Left colon (tissue), 2 donors: ENCODE measurements at regions of chr19 and their contacts with region 1.

Region 1: DNA sequence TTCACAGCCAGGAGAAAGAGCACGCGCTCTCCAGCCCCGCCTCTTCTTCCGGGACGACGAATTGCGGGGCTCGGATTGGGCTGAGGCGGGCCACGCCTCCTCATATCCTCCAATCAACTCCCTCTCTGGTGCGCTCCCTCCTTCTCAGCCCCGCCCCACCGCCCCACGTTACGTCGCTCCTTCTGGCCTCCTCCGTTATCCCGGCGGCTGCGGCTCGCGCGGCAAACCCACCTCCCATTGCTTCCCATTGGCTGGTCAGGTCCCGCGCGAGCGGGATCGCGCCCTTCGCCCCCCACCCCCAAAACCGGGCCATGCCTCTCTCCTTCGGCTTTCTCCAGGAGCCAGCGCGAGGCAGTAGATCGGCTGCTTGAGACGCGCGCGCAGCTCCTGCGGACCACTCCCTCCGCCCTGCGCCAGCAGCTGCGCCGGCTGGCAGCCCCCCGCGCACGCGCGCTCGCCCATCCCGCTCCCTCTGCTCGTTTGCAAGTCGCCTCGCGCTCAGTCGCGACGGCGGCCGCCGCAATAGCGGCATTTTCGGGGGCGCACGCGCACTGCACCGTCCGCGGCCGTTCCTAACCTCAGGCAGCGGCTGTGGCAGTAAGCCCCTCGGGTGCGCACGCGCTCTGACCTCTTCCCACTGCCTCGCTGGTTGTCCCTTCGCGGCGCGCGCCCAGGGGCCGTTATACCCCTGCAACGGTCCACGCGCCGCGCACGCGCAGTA is 512 bp upstream of the ARHGAP35 start:
- DNase-seq: peak; percentile 98 to 99
- ATAC-seq: peak; percentile 84

Region 2: GRCh38 chr19:46975925-46976782 is 115.9 kb after region 1 on chr19:
- intact Hi-C with region 1: loop called in 1 of 2 experiments (anchors 10 kb)
- DNase-seq: peak; percentile 66 to 85
- ATAC-seq: peak; percentile 54

Region 3: DNA sequence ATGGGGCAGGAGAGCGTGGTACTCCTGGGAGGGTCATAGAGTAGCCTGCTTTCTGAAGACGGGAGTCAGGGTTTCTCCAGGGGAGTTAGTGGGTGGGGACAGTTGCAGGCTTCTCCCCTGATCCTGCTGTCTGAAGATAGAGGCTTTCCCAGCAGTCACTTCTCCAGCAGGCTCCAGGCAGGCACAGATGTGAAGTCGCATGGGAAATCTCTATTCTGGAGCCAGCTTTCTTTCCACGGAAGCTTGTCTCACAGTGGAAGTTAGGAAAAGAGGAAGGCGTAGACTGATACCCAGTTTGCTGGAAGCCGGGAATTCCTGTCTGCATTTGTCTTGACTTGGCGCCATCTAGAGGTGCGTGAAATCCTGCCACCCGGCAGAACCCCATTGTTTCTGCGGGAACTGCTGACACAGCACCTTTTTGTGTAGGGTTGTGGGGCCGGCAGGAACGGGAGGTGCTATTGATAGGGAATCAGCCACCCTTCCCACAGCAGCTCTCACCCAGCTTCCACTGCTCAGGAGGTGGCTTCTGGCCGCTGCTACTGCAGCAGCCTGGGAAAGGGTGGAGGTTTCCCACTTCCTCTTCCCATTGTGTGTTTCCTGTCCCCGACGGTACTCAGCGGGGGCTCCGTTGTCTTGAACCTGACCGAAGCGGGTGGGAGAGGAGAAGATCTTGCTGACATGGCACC is 130.8 kb after region 1 on chr19:
- intact Hi-C with region 1: loop called in 1 of 2 experiments (anchors 5 kb)
- DNase-seq: peak; percentile 74 to 84
- ATAC-seq: peak; percentile 86